PC-3 (cell line): ENCODE measurements at regions of chr22 and their contacts with region 1.

Region 1: DNA sequence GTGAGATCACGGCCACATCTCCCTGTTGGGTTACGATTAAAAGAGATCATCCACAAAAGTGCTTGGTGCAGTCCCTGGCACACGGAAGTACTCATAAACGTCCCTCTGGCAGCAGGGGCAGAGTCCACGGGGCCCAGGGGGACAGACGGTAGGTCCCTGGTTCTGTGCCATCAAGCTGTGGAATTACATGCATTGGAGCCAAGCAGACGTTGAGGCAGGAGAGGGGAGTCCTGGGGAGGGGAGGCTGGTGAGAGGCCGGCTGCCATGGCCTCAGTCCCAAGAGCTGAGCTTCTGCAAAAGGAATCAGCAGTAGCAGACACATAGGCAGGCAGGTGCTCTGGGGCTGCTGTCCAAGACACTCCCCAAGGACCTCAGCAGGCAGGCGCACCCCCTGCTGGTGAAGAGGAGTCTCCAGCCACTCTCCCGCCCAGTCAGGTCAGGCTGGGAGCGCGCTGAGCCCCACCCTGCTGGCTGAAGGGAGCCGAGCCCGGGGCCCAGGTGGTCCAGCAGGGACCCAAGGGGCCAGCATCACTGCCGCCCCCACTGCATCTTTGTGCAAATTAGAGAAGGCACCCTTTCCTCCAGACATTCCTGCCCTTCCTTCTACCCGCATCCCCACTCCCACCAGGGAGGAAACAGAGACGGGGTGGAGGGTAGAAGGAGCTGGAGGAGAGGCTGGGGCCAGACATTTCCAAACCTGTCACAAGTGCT is 7.6 kb upstream of the KCTD17 start:
- DNase-seq: peak; percentile 66
- ATAC-seq: peak; percentile 92
- H3K4me3 ChIP-seq: no peak overlapping the region
- H3K27ac ChIP-seq: no peak overlapping the region
- H3K4me1 ChIP-seq: peaks cover 20% of the 10 kb centered on the region
- H3K27me3 ChIP-seq: no peaks in the 10 kb centered on the region
- CTCF ChIP-seq: peak; percentile 75

Region 2: DNA sequence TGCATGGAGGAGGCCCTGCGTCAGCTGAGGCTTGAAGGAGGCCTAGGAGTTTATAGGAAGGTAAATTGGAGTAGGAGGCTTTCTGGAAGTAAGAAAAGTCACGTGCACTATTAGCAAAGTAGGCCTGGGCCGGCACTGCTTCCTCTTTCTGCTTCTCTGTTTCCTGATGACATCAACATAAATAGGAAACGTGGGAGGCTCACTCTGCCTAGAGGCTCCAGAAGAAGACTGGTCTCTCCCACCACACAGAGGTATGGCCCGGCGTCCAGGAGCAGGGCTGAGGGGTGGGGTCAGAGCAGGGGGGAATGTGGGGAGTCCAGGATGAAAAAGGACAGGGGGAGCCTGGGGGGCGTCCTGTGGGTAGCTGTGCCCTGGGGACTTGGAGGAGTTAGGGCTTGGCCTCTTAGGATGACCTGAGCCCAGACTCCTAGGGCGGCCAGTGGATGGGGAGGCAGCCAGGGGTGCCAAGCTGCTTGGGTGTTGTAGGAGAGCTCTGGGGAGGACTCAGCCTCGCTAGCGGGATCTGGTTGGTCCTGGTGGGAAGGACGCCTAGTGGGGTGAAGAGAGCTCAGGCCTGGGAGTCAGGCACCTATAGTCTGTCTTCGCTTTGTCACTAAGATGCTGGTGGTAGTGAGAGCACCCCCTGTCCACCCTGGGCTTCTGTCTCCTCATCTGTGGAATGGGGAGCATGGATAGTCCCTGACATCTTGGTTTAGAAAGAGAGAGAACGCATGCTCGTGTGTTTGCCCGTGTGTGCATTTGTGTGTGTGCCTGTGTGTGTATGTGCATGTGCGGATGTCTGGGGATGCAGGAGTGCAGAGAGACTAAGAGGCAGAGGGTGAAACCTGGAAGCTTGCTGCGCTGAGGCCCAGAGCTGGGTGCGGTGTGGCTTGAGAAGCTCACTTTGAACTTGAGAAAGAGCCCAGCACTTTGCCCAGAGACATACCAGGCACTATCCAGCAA is 130.3 kb before region 1 on chr22 and contains the start of gene CSF2RB:
- CTCF ChIA-PET with region 1: no interaction called
- POLR2A ChIA-PET with region 1: no interaction called
- intact Hi-C with region 1: no loop called
- DNase-seq: no peak
- ATAC-seq: no peak
- H3K4me3 ChIP-seq: no peak within 1 kb of the TSS
- H3K27ac ChIP-seq: no peak within 1 kb of the TSS
- H3K4me1 ChIP-seq: no peaks in the 10 kb centered on the region
- H3K27me3 ChIP-seq: peaks cover 12% of the 10 kb centered on the region
- CTCF ChIP-seq: no peak
- total RNA-seq, gene CSF2RB: 0.12 TPM in 1 of 2 replicates, not detected in the other

Region 3: GRCh38 chr22:36986242-36986821 is 57.7 kb before region 1 on chr22:
- CTCF ChIA-PET with region 1: no interaction called
- POLR2A ChIA-PET with region 1: no interaction called
- intact Hi-C with region 1: loop called (anchors 1 kb)
- DNase-seq: peak; percentile 65
- ATAC-seq: no peak
- H3K4me3 ChIP-seq: no peak overlapping the region
- H3K27ac ChIP-seq: no peak overlapping the region
- H3K4me1 ChIP-seq: no peaks in the 10 kb centered on the region
- H3K27me3 ChIP-seq: peaks cover 16% of the 10 kb centered on the region
- CTCF ChIP-seq: peak; percentile 86

Region 4: DNA sequence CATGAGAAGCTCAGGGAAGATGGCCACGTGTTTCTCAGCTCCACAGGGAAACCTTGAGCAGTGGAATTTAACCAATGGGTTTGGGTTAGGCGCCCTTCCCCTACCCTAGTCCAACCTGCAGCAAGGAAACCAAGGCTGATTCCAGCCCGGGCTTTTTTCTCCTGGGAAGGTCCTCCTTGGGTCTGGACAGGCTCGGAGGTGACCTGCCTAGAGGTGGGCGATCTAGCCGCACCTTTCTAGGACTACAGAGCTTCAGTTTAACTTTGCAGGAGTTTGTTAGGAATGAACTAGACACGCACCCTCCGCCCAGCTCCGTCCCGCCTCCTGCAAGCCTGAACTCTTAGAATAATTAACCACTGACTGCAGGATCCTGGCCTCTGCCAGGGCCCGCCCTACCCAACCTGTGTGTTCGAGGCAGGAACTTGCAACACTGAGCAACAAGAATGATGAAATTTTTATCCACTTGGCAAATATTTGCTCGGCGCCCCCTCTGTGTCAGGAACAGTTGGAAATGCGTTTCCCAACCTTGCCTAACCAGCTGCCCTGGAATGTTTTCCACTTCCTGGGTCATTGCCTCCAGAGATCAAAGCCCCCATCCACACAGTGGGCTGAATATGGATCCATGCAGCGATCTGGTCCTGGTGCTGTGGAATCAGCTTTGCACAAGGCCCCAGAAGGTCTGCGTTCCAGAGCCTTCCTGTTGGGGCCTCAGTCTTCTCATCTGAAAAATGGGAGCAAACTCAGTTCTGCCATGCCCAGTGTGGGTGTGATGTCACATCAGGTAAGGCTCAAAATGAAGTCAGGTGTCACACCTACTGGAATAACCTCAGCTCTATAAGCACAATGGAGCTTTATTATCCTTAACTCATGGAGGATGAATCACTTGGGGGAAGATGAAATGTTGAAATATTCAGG is 11.2 kb before region 1 on chr22:
- CTCF ChIA-PET with region 1: no interaction called
- POLR2A ChIA-PET with region 1: interaction called, 18 read pairs
- intact Hi-C with region 1: no loop called
- DNase-seq: peak; percentile 73
- ATAC-seq: peak; percentile 48
- H3K4me3 ChIP-seq: no peak overlapping the region
- H3K27ac ChIP-seq: peak overlapping the region; percentile 53
- H3K4me1 ChIP-seq: peaks cover 23% of the 10 kb centered on the region
- H3K27me3 ChIP-seq: no peaks in the 10 kb centered on the region
- CTCF ChIP-seq: no peak

Region 5: DNA sequence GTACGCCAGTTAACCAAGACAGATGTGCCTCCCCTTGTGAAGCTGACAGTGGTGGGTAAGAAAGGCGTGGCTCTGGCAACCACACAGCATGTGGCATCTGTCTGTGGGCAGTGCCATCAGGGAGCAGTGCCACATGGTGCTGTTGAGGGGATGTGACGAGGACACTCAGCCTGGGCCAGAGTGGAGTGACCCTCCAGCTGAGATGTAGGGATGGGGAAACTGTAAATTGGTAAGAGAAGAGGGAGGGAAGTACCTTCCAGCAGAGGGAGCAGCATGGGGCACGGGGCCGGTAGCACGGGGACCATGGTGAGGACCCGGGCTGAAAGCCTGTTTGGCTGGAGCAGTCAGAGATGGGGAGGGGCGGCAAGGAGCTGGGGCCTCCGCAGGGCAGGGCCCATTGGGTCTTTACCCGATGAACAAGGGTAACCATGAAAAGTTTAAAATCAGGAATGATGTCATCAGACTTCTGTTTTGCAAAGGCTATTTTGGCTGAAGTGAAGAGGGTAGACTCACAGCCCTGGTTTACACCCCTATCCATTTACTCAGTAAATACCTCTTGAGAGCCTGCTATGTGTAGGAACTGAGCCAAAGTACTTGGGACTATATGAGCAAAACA is 55.1 kb after region 1 on chr22:
- CTCF ChIA-PET with region 1: no interaction called
- POLR2A ChIA-PET with region 1: no interaction called
- intact Hi-C with region 1: no loop called
- DNase-seq: no peak
- ATAC-seq: no peak
- H3K4me3 ChIP-seq: no peak overlapping the region
- H3K27ac ChIP-seq: no peak overlapping the region
- H3K4me1 ChIP-seq: no peaks in the 10 kb centered on the region
- H3K27me3 ChIP-seq: 0 out of 2 replicates have a peak, but pooled peaks cover 8% of the 10 kb centered on the region
- CTCF ChIP-seq: peak; percentile 33; the same call in 1 of the 2 replicates

Region 6: DNA sequence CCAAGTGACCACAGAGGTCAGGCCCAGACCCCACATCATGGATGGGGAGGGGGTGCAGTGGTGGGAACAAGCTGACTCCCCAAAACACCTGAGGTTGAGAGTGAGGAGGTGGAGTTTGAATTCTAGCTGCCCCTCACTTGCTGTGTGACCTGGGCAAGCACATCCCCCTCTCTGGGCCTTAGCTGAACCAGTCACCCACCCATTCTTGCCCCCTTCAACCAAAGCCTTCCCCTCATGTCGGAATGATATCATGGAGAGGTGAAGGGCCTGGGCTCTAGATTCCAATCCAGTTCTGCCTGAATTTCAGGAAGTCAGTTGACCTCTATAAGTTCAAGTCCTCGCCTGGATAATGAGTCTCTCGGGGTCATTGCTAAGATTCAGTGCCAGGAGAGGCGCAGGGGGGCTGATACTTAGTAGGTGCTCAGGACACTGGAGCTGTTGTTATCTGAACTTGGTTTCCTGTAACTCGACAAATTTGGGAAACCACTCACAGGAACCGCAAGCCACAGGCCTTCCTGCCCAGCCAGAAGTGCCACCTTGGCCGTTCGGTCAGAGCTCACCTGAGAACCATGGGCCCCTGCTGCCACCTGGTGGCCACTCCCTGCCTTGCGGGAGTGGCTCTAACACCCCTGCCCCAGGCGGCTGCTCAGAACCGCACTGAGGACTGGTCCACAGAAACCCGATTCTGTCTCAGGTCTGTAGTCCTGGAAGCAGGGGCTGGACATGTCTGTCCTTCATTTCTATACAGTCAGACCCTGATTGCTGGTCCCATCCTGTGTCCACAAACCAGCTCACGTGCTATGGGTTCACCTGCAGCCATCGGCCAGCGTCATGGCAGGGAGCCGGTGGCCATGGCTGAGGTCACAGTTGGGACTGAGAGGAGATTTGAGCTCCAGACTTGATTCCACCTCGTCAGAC is 523.2 kb after region 1 on chr22:
- CTCF ChIA-PET with region 1: interaction called, 16 read pairs
- POLR2A ChIA-PET with region 1: no interaction called
- intact Hi-C with region 1: no loop called
- DNase-seq: peak; percentile 93
- ATAC-seq: peak; percentile 63
- H3K4me3 ChIP-seq: no peak overlapping the region
- H3K27ac ChIP-seq: peak overlapping the region; percentile 53
- H3K4me1 ChIP-seq: peaks cover 50% of the 10 kb centered on the region
- H3K27me3 ChIP-seq: no peaks in the 10 kb centered on the region
- CTCF ChIP-seq: peak; percentile 89